ENCODE measurements at regions of chr14 and their contacts with region 1.

Region 1: DNA sequence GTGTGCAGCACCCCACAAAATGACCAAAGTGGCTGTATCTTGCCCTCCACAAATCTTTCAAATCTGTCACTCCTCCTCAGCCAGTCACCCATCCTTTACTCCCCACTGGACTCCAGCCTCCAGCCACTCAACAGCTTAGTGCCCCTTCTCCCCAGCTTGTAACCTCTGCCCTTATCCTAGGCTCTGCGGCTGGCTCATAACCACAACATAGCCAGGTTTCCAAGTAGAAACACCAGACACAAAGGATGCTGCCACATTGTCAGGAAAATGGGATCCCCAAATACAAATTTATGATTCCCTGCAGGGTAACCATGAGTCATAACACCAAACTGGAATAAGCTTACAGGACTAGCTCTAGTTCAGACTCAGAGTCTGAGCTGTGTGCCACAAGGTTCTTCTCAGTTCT is 15.1 kb downstream of the OXA1L start:
- DNase-seq: no peak
- ATAC-seq: no peak
- H3K4me3 Mint-ChIP-seq: no peak overlapping the region
- H3K27ac Mint-ChIP-seq: peak overlapping the region; percentile 76
- H3K4me1 Mint-ChIP-seq: peaks cover 15% of the 10 kb centered on the region
- H3K27me3 Mint-ChIP-seq: no peaks in the 10 kb centered on the region
- CTCF ChIP-seq: no peak

Region 2: DNA sequence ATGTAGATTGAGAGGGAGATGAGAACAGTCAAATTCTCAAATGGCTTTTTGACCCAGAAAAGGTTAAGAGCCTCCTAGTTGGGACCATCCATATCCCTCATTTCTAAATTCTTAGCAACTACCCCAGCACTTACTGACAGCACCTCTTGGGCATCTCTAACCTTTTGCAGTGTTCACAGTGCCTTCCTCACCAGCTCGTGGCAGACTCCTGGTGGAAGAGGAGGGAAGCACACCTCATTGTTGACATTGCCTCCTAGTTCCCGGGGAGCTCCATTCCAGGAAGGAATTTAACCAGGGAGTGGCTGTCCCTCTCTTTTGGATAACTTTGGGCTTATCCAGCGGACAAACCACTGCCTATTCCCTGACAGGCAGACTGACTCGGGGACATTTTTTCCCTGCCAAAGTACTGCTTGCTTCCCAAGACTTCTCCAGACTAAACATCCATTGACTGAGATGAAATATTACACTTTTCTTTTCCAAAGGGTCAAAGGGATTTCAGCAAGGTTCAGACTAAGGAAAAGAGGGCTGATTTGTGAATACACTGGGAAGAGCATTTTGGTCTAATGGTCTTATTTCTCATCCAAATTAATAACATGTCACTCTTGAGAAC is 128.5 kb before region 1 on chr14:
- CTCF ChIA-PET with region 1: no interaction called
- POLR2A ChIA-PET with region 1: no interaction called
- intact Hi-C with region 1: no loop called
- DNase-seq: no peak
- ATAC-seq: peak; percentile 78
- H3K4me3 Mint-ChIP-seq: no peak overlapping the region
- H3K27ac Mint-ChIP-seq: no peak overlapping the region
- H3K4me1 Mint-ChIP-seq: no peaks in the 10 kb centered on the region
- H3K27me3 Mint-ChIP-seq: no peaks in the 10 kb centered on the region
- CTCF ChIP-seq: no peak

Region 3: DNA sequence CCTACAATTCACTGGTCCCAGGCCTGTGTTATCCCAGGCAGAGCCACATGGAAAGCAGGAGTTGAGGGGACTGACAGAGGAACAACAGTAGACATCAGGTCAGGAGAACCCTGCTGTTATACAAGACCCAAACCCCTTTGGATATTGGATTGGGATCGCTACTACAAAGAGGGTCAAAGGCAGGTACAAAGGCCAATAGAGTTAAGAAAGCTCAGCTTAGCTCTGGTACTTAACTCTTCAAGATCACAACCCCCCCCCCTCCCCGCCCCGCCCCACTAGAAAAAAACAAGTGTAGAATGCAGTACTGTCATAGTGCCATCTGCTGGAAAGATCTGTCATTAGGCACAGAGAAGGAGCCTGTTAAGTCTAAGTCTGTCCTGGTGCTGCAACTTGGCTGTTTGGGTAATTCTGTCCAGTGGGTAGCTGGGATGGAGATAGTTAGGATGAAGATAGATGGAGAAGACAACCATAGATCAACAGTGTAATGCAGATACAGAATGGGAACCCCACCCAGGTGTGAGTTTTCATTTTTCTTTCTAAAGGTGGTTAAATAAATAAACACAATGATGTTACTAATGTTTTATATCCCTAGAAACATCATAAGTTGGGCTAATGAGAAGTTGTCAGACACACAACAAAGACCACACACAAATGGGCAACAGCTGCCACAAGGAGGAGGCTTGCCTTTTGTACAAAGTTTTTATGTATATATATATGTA is 118.7 kb after region 1 on chr14:
- CTCF ChIA-PET with region 1: no interaction called
- POLR2A ChIA-PET with region 1: no interaction called
- intact Hi-C with region 1: loop called (anchors 1 kb)
- DNase-seq: no peak
- ATAC-seq: peak; percentile 91
- H3K4me3 Mint-ChIP-seq: no peak overlapping the region
- H3K27ac Mint-ChIP-seq: peak overlapping the region; percentile 43
- H3K4me1 Mint-ChIP-seq: peaks cover 5% of the 10 kb centered on the region
- H3K27me3 Mint-ChIP-seq: no peaks in the 10 kb centered on the region
- CTCF ChIP-seq: no peak